ENCODE measurements at regions of chr11 and their contacts with region 1.

Region 1: DNA sequence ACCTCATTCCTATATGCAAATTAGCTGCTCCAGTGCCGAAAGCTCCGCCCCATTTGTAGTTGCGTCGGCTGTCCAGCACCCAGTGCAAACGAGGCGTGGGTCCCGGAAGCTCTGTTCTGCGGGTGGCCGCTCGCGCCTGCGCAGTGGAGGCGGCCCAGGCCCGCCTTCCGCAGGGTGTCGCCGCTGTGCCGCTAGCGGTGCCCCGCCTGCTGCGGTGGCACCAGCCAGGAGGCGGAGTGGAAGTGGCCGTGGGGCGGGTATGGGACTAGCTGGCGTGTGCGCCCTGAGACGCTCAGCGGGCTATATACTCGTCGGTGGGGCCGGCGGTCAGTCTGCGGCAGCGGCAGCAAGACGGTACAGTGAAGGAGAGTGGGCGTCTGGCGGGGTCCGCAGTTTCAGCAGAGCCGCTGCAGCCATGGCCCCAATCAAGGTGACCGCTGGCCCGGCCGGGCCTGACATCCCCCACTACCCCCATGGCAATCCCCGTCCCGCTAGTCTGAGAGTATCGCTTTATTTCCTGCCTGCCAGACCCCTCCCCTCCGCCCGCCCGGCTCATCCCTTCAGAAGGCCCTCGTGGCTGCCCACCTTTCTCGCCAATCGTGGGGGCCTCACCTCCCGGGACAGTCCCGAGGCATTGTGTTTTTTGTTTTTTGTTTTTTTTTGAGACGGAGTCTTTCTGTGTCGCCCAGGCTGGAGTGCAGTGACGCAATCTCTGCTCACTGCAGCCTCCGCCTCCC is at the start of gene PRDX5:
- DNase-seq: peak; percentile 96 to 98 (median 97)
- H3K4me3 ChIP-seq: peak within 1 kb of the TSS; percentile 68 to 72
- H3K4me3 Mint-ChIP-seq: peak within 1 kb of the TSS; percentile 95 to 99 (median 96)
- H3K27ac ChIP-seq: peak within 1 kb of the TSS; percentile 96
- H3K27ac Mint-ChIP-seq: peak within 1 kb of the TSS; percentile 97 to 100 (median 100)
- H3K4me1 ChIP-seq: peaks cover 26% of the 10 kb centered on the region
- H3K4me1 Mint-ChIP-seq: peaks cover 17 to 44% (median 29%) of the 10 kb centered on the region in 4 donors
- H3K27me3 ChIP-seq: no peaks in the 10 kb centered on the region
- H3K27me3 Mint-ChIP-seq: no peaks in the 10 kb centered on the region
- total RNA-seq, gene PRDX5: 57.6 to 58.7 TPM

Region 2: DNA sequence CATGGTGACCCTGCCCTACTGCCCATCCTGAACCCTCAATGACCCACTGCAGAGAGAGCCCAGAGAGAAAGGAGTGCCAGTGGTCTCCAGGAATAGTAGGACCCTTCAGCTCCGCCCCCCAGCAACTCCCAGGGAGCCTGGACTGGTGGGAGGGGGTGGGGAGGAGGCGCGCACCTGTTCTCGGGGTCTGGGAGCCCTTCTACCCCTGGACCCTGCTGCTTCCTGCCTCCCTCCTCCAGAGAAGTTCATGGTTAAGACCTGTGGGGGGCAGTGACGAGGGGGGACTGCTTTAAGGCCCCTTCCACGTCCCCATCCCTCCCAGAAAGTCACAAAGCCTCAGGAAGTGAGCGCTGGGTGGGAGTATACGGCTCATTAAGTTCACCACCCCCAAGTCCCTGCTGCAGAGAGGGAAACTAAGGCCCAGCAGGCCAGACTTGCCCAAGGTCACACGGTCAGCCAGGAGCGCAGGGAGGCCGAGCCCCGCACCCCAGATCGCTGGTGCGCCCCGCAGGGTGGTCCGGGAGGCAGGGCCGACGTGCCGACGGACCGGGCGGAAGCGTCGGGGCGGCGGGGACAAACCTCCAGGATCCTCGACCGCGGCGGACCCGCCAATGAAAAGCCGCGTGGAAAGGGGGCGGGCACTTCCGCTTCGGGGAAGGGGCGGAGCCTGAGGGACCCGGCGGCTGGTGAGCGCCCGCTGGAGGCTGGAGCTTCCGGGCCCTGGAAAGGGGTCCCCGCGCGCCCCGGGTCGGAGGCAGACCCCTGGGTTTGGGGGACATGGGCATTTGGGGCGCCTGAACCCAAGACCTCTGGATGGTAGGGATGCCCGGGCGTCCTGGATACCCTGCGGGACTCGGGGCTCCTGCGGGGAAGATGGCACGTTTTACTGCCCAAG is 92.3 kb before region 1 on chr11 and contains the starts of genes NUDT22 and TRPT1:
- CTCF ChIA-PET with region 1: interaction called, 3 read pairs
- POLR2A ChIA-PET with region 1: interaction called, 17 read pairs
- intact Hi-C with region 1: no loop called
- DNase-seq: peak; percentile 82 to 88 (median 85)
- H3K4me3 ChIP-seq: peak within 1 kb of the TSS; percentile 86 to 94
- H3K4me3 Mint-ChIP-seq: peak within 1 kb of the TSS; percentile 89 to 94 (median 92)
- H3K27ac ChIP-seq: peak within 1 kb of the TSS; percentile 77
- H3K27ac Mint-ChIP-seq: peak within 1 kb of the TSS; percentile 88 to 97 (median 93)
- H3K4me1 ChIP-seq: peaks cover 43% of the 10 kb centered on the region
- H3K4me1 Mint-ChIP-seq: peaks cover 13 to 50% (median 28%) of the 10 kb centered on the region in 4 donors
- H3K27me3 ChIP-seq: no peaks in the 10 kb centered on the region
- H3K27me3 Mint-ChIP-seq: no peaks in the 10 kb centered on the region
- total RNA-seq, gene NUDT22: 83.9 to 101 TPM
- total RNA-seq, gene TRPT1: 37.6 to 42.1 TPM

Region 3: GRCh38 chr11:64246871-64247728 is 71.0 kb before region 1 on chr11 and contains the start of gene PPP1R14B:
- CTCF ChIA-PET with region 1: interaction called, 5 read pairs
- POLR2A ChIA-PET with region 1: interaction called, 23 read pairs
- intact Hi-C with region 1: no loop called
- DNase-seq: peak; percentile 72 to 82 (median 74)
- H3K4me3 ChIP-seq: peak within 1 kb of the TSS; percentile 95 to 98
- H3K4me3 Mint-ChIP-seq: peak within 1 kb of the TSS; percentile 83 to 92 (median 88)
- H3K27ac ChIP-seq: peak within 1 kb of the TSS; percentile 63
- H3K27ac Mint-ChIP-seq: peak within 1 kb of the TSS; percentile 77 to 94 (median 92)
- H3K4me1 ChIP-seq: peaks cover 55% of the 10 kb centered on the region
- H3K4me1 Mint-ChIP-seq: peaks cover 10 to 70% (median 32%) of the 10 kb centered on the region in 4 donors
- H3K27me3 ChIP-seq: no peaks in the 10 kb centered on the region
- H3K27me3 Mint-ChIP-seq: no peaks in the 10 kb centered on the region
- total RNA-seq, gene PPP1R14B: 32.2 to 38.4 TPM

Region 4: GRCh38 chr11:64284048-64284961 is 33.8 kb before region 1 on chr11 and contains the start of gene BAD:
- CTCF ChIA-PET with region 1: no interaction called
- POLR2A ChIA-PET with region 1: interaction called, 23 read pairs
- intact Hi-C with region 1: loop called (anchors 1 kb)
- DNase-seq: peak; percentile 89 to 94 (median 90)
- H3K4me3 ChIP-seq: peak within 1 kb of the TSS; percentile 93 to 96
- H3K4me3 Mint-ChIP-seq: peak within 1 kb of the TSS; percentile 90 to 93 (median 92)
- H3K27ac ChIP-seq: peak within 1 kb of the TSS; percentile 100
- H3K27ac Mint-ChIP-seq: peak within 1 kb of the TSS; percentile 96 to 99 (median 98)
- H3K4me1 ChIP-seq: peaks cover 24% of the 10 kb centered on the region
- H3K4me1 Mint-ChIP-seq: peaks cover 12 to 48% (median 23%) of the 10 kb centered on the region in 4 donors
- H3K27me3 ChIP-seq: no peaks in the 10 kb centered on the region
- H3K27me3 Mint-ChIP-seq: no peaks in the 10 kb centered on the region
- total RNA-seq, gene BAD: 23.1 to 26.2 TPM

Region 5: GRCh38 chr11:64341851-64342791 is 24.0 kb after region 1 on chr11:
- CTCF ChIA-PET with region 1: interaction called, 40 read pairs
- POLR2A ChIA-PET with region 1: interaction called, 153 read pairs
- intact Hi-C with region 1: loop called (anchors 1 kb)
- DNase-seq: peak; percentile 87 to 91 (median 89)
- H3K4me3 ChIP-seq: no peak overlapping the region
- H3K4me3 Mint-ChIP-seq: peak overlapping the region in 7 of 8 donors; percentile 39 to 93 (median 63)
- H3K27ac ChIP-seq: peak overlapping the region; percentile 42
- H3K27ac Mint-ChIP-seq: peak overlapping the region in 6 of 7 donors; percentile 48 to 88 (median 76)
- H3K4me1 ChIP-seq: peaks cover 44% of the 10 kb centered on the region
- H3K4me1 Mint-ChIP-seq: peaks cover 21 to 51% (median 36%) of the 10 kb centered on the region in 4 donors
- H3K27me3 ChIP-seq: no peaks in the 10 kb centered on the region
- H3K27me3 Mint-ChIP-seq: no peaks in the 10 kb centered on the region

Region 6: DNA sequence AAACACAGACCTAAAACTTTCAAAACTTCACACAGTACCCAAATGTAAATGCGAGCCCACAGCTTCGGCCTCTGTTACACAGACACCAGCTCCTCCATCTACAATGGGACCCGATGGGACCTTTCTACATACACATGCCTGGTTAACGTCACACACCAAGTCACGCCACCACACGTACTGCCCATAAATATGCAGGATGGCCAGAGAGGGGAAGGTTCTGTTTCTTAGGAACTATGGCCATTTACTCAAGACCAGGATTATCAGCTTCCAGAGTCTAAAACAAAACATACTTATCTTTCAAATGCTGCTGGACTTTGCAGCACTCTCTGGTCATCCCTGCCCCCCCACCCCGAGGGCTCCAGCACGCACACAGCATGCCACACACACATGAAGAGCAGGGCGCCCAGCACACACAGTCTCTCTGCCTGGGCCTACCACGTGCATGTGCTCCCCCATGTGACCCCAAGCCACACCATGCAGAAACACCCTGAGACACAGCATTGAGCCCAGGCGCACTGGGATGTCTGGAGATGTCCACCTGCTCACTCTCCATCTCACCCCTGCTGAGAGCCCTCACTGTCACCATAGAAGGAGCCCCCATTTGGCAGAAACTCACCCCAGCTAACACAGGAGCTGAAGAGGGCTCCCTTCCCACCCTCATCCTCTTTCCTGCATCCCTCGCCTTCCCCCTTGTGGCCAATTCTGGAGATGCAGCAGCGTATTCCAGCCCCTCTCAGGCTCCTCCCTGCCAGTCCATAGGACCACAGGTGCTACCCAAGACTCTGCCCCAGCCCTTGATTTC is 334.7 kb after region 1 on chr11:
- CTCF ChIA-PET with region 1: interaction called, 5 read pairs
- POLR2A ChIA-PET with region 1: no interaction called
- intact Hi-C with region 1: loop called (anchors 1 kb)
- DNase-seq: peak; percentile 54 to 65 (median 62)
- H3K4me3 ChIP-seq: no peak overlapping the region
- H3K4me3 Mint-ChIP-seq: no peak overlapping the region
- H3K27ac ChIP-seq: no peak overlapping the region
- H3K27ac Mint-ChIP-seq: peak overlapping the region in 2 of 7 donors; percentile 18 to 64
- H3K4me1 ChIP-seq: no peaks in the 10 kb centered on the region
- H3K4me1 Mint-ChIP-seq: peaks cover 0 to 5% (median 2%) of the 10 kb centered on the region in 4 donors
- H3K27me3 ChIP-seq: no peaks in the 10 kb centered on the region
- H3K27me3 Mint-ChIP-seq: peaks cover 6 to 14% of the 10 kb centered on the region in 2 donors